Endothelial cell of umbilical vein (primary cell): ENCODE measurements at regions of chr15 and their contacts with region 1.

Region 1: GRCh38 chr15:71443538-71443937 is 328.3 kb downstream of the THSD4 start:
- DNase-seq: peak; percentile 55
- H3K4me3 ChIP-seq: no peak overlapping the region
- H3K27ac ChIP-seq: no peak overlapping the region
- H3K4me1 ChIP-seq: peaks cover 20% of the 10 kb centered on the region
- H3K27me3 ChIP-seq: no peaks in the 10 kb centered on the region
- CTCF ChIP-seq: peak; percentile 78 to 80
- POLR2A ChIP-seq: no peak

Region 2: GRCh38 chr15:70826634-70827033 is 616.9 kb before region 1 on chr15:
- CTCF ChIA-PET with region 1: interaction called, 3 read pairs
- POLR2A ChIA-PET with region 1: no interaction called
- dilution Hi-C with region 1: no loop called
- intact Hi-C with region 1: loop called (anchors 5 kb)
- DNase-seq: peak; percentile 36
- H3K4me3 ChIP-seq: no peak overlapping the region
- H3K27ac ChIP-seq: no peak overlapping the region
- H3K4me1 ChIP-seq: no peaks in the 10 kb centered on the region
- H3K27me3 ChIP-seq: no peaks in the 10 kb centered on the region
- CTCF ChIP-seq: no peak
- POLR2A ChIP-seq: no peak

Region 3: GRCh38 chr15:71003319-71003718 is 440.2 kb before region 1 on chr15:
- CTCF ChIA-PET with region 1: interaction called, 89 read pairs
- POLR2A ChIA-PET with region 1: no interaction called
- dilution Hi-C with region 1: no loop called
- intact Hi-C with region 1: no loop called
- DNase-seq: peak; percentile 21
- H3K4me3 ChIP-seq: no peak overlapping the region
- H3K27ac ChIP-seq: no peak overlapping the region
- H3K4me1 ChIP-seq: peaks cover 9% of the 10 kb centered on the region
- H3K27me3 ChIP-seq: no peaks in the 10 kb centered on the region
- CTCF ChIP-seq: no peak
- POLR2A ChIP-seq: no peak

Region 4: GRCh38 chr15:71109130-71109529 is 334.4 kb before region 1 on chr15:
- CTCF ChIA-PET with region 1: interaction called, 102 read pairs
- POLR2A ChIA-PET with region 1: no interaction called
- dilution Hi-C with region 1: no loop called
- intact Hi-C with region 1: no loop called
- DNase-seq: no peak
- H3K4me3 ChIP-seq: no peak overlapping the region
- H3K27ac ChIP-seq: no peak overlapping the region
- H3K4me1 ChIP-seq: no peaks in the 10 kb centered on the region
- H3K27me3 ChIP-seq: no peaks in the 10 kb centered on the region
- CTCF ChIP-seq: no peak
- POLR2A ChIP-seq: no peak

Region 5: GRCh38 chr15:71294886-71295638 is 148.5 kb before region 1 on chr15:
- CTCF ChIA-PET with region 1: interaction called, 12 read pairs
- POLR2A ChIA-PET with region 1: no interaction called
- dilution Hi-C with region 1: no loop called
- intact Hi-C with region 1: loop called (anchors 1 kb)
- DNase-seq: peak; percentile 99
- H3K4me3 ChIP-seq: no peak overlapping the region
- H3K27ac ChIP-seq: peak overlapping the region; percentile 97
- H3K4me1 ChIP-seq: peaks cover 35% of the 10 kb centered on the region
- H3K27me3 ChIP-seq: no peaks in the 10 kb centered on the region
- CTCF ChIP-seq: no peak
- POLR2A ChIP-seq: peak; percentile 81

Region 6: DNA sequence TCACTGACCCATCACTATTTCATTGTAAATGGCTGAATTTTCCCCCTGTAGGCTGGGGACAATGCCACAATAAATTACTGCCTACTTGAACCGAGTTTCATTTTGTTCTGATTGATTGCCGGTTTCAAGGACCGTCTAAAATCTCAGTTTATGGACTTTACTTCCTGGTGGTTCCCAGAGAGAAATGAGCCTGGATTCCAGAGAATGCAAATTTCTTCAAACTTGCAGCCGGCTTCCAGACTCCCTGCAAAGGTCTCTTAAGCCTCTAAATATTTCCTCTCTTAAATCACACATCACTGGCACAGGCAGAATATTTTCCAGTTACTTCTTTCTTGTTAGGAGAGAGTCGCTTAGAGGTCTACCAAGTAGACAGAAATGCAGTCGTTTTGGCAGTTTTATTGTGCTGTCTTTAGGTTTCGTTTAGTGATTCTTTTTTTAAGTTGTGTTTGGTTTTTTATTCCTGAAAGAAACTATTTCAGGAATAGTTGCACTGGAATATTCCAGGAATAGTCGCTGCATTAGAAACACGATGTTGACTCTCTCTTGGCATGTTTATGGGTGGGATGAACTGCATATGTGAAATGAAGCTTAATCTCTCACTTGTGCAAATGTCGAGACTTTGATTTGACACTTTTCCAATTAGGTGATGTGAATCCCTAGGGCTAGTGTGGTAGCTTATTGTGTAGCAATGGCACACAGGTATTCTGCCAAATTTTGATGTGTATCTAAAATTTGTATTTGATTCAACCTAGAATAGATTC is 82.7 kb after region 1 on chr15:
- CTCF ChIA-PET with region 1: no interaction called
- POLR2A ChIA-PET with region 1: no interaction called
- dilution Hi-C with region 1: no loop called
- intact Hi-C with region 1: no loop called
- DNase-seq: no peak
- H3K4me3 ChIP-seq: no peak overlapping the region
- H3K27ac ChIP-seq: no peak overlapping the region
- H3K4me1 ChIP-seq: no peaks in the 10 kb centered on the region
- H3K27me3 ChIP-seq: peaks cover 7 to 21% of the 10 kb centered on the region in 2 experiments
- CTCF ChIP-seq: no peak
- POLR2A ChIP-seq: no peak

Region 7: GRCh38 chr15:71752604-71753289 is 309.2 kb after region 1 on chr15:
- CTCF ChIA-PET with region 1: interaction called, 11 read pairs
- POLR2A ChIA-PET with region 1: no interaction called
- dilution Hi-C with region 1: no loop called
- intact Hi-C with region 1: no loop called
- DNase-seq: peak; percentile 92
- H3K4me3 ChIP-seq: no peak overlapping the region
- H3K27ac ChIP-seq: peak overlapping the region; percentile 54
- H3K4me1 ChIP-seq: peaks cover 47% of the 10 kb centered on the region
- H3K27me3 ChIP-seq: no peaks in the 10 kb centered on the region
- CTCF ChIP-seq: peak; percentile 71 to 83
- POLR2A ChIP-seq: no peak